ENCODE measurements at regions of chr22 and their contacts with region 1.

Region 1: DNA sequence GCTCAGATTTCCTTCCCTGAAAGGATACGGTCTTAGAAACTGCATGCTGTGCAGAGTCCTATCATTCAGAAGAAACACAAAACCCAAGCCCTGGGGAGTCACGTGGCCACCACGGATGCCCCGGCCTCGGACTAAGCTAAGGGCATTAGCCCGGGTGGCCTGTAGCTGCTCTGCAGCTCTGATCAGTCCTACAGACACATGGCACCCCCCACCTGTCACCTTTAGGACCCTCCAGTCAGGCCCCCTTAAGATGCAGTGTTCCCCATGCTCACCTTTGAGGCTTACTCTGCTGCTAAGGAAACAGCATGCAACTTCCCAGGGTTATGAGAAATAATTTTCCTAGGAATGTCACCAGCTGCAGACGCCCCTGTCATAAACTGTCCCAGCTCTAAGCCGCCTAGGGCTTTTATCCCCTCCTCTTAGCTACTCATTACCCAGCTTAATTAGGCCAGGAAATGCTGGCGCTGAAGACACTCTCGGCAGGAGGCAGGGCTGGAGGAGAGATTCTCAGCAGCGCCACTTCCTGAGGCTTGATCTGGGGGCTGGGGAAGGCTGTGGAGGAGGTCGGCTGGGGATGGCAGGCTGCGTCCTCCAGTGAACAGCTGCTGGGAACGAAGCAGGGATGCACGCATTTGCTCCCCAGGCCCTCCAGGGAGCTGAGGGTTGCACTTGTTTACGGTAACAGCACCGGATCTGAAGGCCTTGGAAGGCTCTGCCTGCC is 47.2 kb upstream of the ADA2 start:
- DNase-seq: peak in 5 of 9 donors; percentile 30 to 40 (median 33)
- ATAC-seq: peak; percentile 37
- H3K4me3 ChIP-seq: no peak overlapping the region
- H3K4me3 Mint-ChIP-seq: peak overlapping the region in 9 of 10 donors; percentile 5 to 75 (median 46)
- H3K27ac ChIP-seq: peak overlapping the region; percentile 39
- H3K27ac Mint-ChIP-seq: peak overlapping the region; percentile 71 to 91 (median 78)
- H3K4me1 ChIP-seq: peaks cover 0 to 11% of the 10 kb centered on the region in 2 donors
- H3K4me1 Mint-ChIP-seq: peaks cover 0 to 43% (median 29%) of the 10 kb centered on the region in 7 donors
- H3K27me3 ChIP-seq: no peaks in the 10 kb centered on the region
- H3K27me3 Mint-ChIP-seq: no peaks in the 10 kb centered on the region

Region 2: GRCh38 chr22:17164392-17165024 is 101.9 kb before region 1 on chr22:
- CTCF ChIA-PET with region 1: no interaction called
- POLR2A ChIA-PET with region 1: no interaction called
- intact Hi-C with region 1: no loop called
- DNase-seq: no peak
- ATAC-seq: no peak
- H3K4me3 ChIP-seq: no peak overlapping the region
- H3K4me3 Mint-ChIP-seq: no peak overlapping the region
- H3K27ac ChIP-seq: no peak overlapping the region
- H3K27ac Mint-ChIP-seq: no peak overlapping the region
- H3K4me1 ChIP-seq: peaks cover 5 to 7% of the 10 kb centered on the region in 2 donors
- H3K4me1 Mint-ChIP-seq: peaks cover 0 to 7% (median 6%) of the 10 kb centered on the region in 7 donors
- H3K27me3 ChIP-seq: no peaks in the 10 kb centered on the region
- H3K27me3 Mint-ChIP-seq: peaks cover 0 to 18% (median 0%) of the 10 kb centered on the region in 5 donors

Region 3: GRCh38 chr22:17368554-17369438 is 102.4 kb after region 1 on chr22:
- CTCF ChIA-PET with region 1: interaction called, 3 read pairs
- POLR2A ChIA-PET with region 1: no interaction called
- intact Hi-C with region 1: loop called in 1 of 2 experiments (anchors 5 kb)
- DNase-seq: peak in 3 of 9 donors; percentile 9 to 26 (median 16)
- ATAC-seq: peak; percentile 6
- H3K4me3 ChIP-seq: no peak overlapping the region
- H3K4me3 Mint-ChIP-seq: peak overlapping the region; percentile 75 to 86 (median 81)
- H3K27ac ChIP-seq: no peak overlapping the region
- H3K27ac Mint-ChIP-seq: peak overlapping the region in 2 of 9 donors; percentile 38 to 55
- H3K4me1 ChIP-seq: peaks cover 0 to 14% of the 10 kb centered on the region in 2 donors
- H3K4me1 Mint-ChIP-seq: peaks cover 13 to 35% (median 28%) of the 10 kb centered on the region in 7 donors
- H3K27me3 ChIP-seq: peaks cover 0 to 16% of the 10 kb centered on the region in 2 donors
- H3K27me3 Mint-ChIP-seq: peaks cover 53 to 68% (median 54%) of the 10 kb centered on the region in 5 donors